Prostate gland (tissue), 2 donors: ENCODE measurements at regions of chr9 and their contacts with region 1.

Region 1: DNA sequence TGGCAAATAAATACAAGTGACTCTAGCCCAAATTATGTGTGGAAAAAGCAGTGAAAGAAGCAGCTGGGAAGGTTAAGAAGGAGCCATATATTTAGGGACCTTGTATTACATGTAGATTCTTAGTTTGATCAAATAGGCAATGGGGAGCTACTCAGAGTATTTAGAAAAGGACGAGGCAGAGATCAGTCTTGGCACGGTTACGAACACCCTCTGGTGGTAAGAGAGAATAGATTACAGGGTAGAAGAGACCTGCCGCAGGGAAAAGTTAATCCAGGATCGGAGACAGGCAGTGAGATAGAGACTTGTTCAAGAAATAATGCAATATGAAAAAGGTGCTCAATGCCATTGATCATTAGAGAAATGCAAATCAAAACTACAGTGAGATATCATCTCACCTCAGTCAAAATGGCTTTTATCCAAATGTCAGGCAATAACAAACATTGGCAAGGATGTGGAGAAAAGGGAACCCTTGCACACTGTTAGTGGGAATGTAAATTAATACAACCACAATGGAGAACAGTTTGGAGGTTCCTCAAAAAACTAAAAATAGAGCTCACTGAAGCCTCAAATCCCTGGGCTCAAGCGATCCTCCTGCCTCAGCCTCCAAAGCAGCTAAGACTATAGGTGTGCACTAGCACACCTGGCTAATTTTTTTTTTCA is 12.0 kb downstream of the INIP start:
- DNase-seq: peak; percentile 27
- H3K4me3 ChIP-seq: no peak overlapping the region
- H3K27ac ChIP-seq: no peak overlapping the region
- H3K4me1 ChIP-seq: no peaks in the 10 kb centered on the region
- H3K27me3 ChIP-seq: no peaks in the 10 kb centered on the region
- CTCF ChIP-seq: peak in 3 of 4 experiments; percentile 22 to 45 (median 44)
- POLR2A ChIP-seq: no peak

Region 2: GRCh38 chr9:112097712-112098688 is 607.9 kb before region 1 on chr9:
- intact Hi-C with region 1: loop called (anchors 10 kb)
- DNase-seq: peak; percentile 31
- H3K4me3 ChIP-seq: no peak overlapping the region
- H3K27ac ChIP-seq: no peak overlapping the region
- H3K4me1 ChIP-seq: no peaks in the 10 kb centered on the region
- H3K27me3 ChIP-seq: no peaks in the 10 kb centered on the region
- CTCF ChIP-seq: peak; percentile 44 to 85 (median 80)
- POLR2A ChIP-seq: no peak

Region 3: GRCh38 chr9:112443200-112443599 is 262.7 kb before region 1 on chr9:
- intact Hi-C with region 1: loop called (anchors 10 kb)
- DNase-seq: no peak
- H3K4me3 ChIP-seq: no peak overlapping the region
- H3K27ac ChIP-seq: no peak overlapping the region
- H3K4me1 ChIP-seq: no peaks in the 10 kb centered on the region
- H3K27me3 ChIP-seq: no peaks in the 10 kb centered on the region
- CTCF ChIP-seq: peak in 3 of 4 experiments; percentile 21 to 47 (median 46)
- POLR2A ChIP-seq: no peak

Region 4: GRCh38 chr9:112764344-112764743 is 58.4 kb after region 1 on chr9:
- intact Hi-C with region 1: no loop called
- DNase-seq: no peak
- H3K4me3 ChIP-seq: no peak overlapping the region
- H3K27ac ChIP-seq: no peak overlapping the region
- H3K4me1 ChIP-seq: no peaks in the 10 kb centered on the region
- H3K27me3 ChIP-seq: no peaks in the 10 kb centered on the region
- CTCF ChIP-seq: no peak
- POLR2A ChIP-seq: no peak